ENCODE measurements at regions of chr1 and their contacts with region 1.

Region 1: GRCh38 chr1:20521960-20522861 is 14.3 kb upstream of the MUL1 start:
- DNase-seq: peak; percentile 81
- ATAC-seq: peak; percentile 94
- H3K4me3 ChIP-seq: peak overlapping the region in 1 of 2 experiments; percentile 18; a peak in 2 of 4 replicates
- H3K27ac ChIP-seq: no peak overlapping the region
- H3K4me1 ChIP-seq: peaks cover 0 to 8% of the 10 kb centered on the region in 2 experiments; a peak in 2 of 4 replicates
- H3K27me3 ChIP-seq: no peaks in the 10 kb centered on the region
- CTCF ChIP-seq: peak; percentile 83 to 96 (median 91)
- POLR2A ChIP-seq: no peak
- RAD21 ChIP-seq: peak; percentile 99

Region 2: DNA sequence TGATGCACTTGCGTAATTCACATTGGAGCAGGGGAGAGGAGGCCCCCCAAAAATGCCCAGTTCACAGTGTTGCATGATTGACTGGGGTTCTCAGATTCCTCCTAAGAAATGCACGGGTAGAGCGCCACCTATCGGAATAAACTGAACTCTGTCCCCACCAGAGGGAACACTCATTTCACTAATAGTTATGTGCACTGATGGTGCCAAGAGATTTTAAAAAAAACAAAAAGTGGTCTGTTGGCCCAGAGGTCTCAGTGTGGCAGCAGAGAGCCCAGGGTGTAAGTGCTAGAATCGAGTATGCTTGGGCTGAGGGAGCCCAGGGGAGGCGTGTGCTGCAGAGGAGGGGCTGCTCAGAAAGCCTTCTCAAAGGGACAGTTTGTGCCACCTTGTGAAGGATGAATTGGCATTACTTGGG is 118.0 kb after region 1 on chr1:
- CTCF ChIA-PET with region 1: no interaction called
- POLR2A ChIA-PET with region 1: interaction called, 5 read pairs
- RAD21 ChIA-PET with region 1: no interaction called
- intact Hi-C with region 1: loop called (anchors 1 kb)
- DNase-seq: peak; percentile 37
- ATAC-seq: peak; percentile 81
- H3K4me3 ChIP-seq: no peak overlapping the region
- H3K27ac ChIP-seq: no peak overlapping the region
- H3K4me1 ChIP-seq: 0 out of 4 replicates have a peak, but pooled peaks cover under 1 to 2% of the 10 kb centered on the region in 2 experiments
- H3K27me3 ChIP-seq: no peaks in the 10 kb centered on the region
- CTCF ChIP-seq: peak; percentile 78 to 91 (median 88)
- POLR2A ChIP-seq: no peak
- RAD21 ChIP-seq: peak; percentile 94